Activated CD8-positive, alpha-beta T cell treated with anti-CD3 and anti-CD28 coated beads, Interleukin-2, amount 10 ng/mL, durations not matched to agents 7 days and 5 days (primary cell): ENCODE measurements at regions of chr22 and their contacts with region 1.

Region 1: GRCh38 chr22:26364066-26365015 is 64.7 kb upstream of the ASPHD2 start:
- DNase-seq: peak; percentile 70
- ATAC-seq: peak; percentile 91
- H3K4me3 Mint-ChIP-seq: no peak overlapping the region
- H3K27ac Mint-ChIP-seq: no peak overlapping the region
- H3K4me1 Mint-ChIP-seq: peaks cover 6% of the 10 kb centered on the region
- H3K27me3 Mint-ChIP-seq: peaks cover 14% of the 10 kb centered on the region

Region 2: DNA sequence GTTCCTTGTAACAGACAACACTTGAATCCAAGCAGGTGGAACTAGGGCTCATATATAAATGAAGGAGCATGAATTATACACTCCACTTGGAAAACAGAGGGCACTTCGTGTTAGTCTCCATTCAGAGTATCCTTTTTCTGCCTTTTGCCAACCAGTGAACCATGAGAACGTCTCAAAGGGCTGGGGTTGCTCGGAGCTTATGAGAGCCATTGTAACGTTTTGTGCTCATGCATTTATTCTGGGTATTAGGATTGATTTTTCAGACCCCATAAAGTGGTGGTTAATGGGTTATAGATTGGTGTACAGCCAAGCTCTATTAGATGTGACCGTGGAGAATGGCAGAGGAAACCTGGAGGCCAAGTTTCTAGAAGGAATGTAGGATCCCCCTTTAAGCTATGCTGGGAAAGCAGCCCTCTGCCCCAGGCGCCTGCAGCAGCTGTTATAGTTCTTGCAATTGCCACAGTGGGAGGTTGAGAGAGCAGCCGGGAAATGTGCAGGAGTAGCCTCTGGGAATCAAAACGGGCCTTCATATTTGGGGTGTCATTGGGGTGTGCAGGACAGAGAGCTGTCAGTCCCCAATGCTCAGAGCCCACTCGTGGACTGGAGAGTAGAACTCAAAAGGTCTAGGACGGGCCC is 10.2 kb after region 1 on chr22:
- CTCF ChIA-PET with region 1: interaction called, 13 read pairs
- POLR2A ChIA-PET with region 1: no interaction called
- DNase-seq: no peak
- ATAC-seq: no peak
- H3K4me3 Mint-ChIP-seq: no peak overlapping the region
- H3K27ac Mint-ChIP-seq: no peak overlapping the region
- H3K4me1 Mint-ChIP-seq: peaks cover 6% of the 10 kb centered on the region
- H3K27me3 Mint-ChIP-seq: peaks cover 34% of the 10 kb centered on the region

Region 3: DNA sequence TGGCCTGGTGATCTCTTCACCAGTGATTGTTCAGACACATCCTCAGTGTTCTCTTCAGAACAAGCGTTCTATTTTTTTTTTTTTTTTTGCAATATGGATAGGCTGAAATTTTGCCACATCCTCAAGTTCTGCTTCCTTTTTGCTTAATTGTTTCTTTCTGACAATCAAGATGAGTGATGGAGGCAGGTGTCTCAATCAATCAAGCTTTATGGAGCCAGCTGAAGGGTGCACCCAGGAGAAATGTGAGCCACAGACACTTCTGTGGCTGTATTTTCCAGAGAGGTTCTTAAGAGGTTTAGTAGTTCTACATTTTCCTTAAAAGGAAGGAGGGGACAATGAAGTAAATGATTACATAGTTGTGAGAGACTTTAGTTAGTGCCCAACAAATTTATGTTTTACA is 20.8 kb after region 1 on chr22:
- CTCF ChIA-PET with region 1: interaction called, 15 read pairs
- POLR2A ChIA-PET with region 1: no interaction called
- DNase-seq: no peak
- ATAC-seq: no peak
- H3K4me3 Mint-ChIP-seq: no peak overlapping the region
- H3K27ac Mint-ChIP-seq: no peak overlapping the region
- H3K4me1 Mint-ChIP-seq: no peaks in the 10 kb centered on the region
- H3K27me3 Mint-ChIP-seq: peaks cover 41% of the 10 kb centered on the region

Region 4: DNA sequence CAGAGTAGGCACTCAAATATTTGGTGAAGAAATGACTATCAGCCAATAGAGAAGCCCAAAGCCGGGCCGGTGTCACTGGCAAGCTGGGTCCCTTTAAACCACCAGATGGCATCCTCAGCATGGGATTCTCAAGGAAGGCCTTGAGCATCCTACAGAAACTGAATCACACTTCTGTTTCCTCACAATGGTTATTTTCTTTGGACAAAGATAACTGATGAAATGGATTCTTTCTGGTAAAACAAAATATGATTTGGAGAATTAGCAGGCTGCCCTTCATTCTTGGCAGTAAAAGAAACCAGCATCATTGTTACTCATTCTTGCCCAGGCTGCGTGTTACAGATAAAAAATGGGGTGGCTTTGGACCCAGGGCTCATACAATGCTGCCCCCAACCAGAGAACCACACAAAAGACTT is 34.4 kb after region 1 on chr22:
- CTCF ChIA-PET with region 1: interaction called, 10 read pairs
- POLR2A ChIA-PET with region 1: no interaction called
- DNase-seq: peak; percentile 66
- ATAC-seq: peak; percentile 85
- H3K4me3 Mint-ChIP-seq: no peak overlapping the region
- H3K27ac Mint-ChIP-seq: no peak overlapping the region
- H3K4me1 Mint-ChIP-seq: peaks cover 1% of the 10 kb centered on the region
- H3K27me3 Mint-ChIP-seq: peaks cover 2% of the 10 kb centered on the region

Region 5: DNA sequence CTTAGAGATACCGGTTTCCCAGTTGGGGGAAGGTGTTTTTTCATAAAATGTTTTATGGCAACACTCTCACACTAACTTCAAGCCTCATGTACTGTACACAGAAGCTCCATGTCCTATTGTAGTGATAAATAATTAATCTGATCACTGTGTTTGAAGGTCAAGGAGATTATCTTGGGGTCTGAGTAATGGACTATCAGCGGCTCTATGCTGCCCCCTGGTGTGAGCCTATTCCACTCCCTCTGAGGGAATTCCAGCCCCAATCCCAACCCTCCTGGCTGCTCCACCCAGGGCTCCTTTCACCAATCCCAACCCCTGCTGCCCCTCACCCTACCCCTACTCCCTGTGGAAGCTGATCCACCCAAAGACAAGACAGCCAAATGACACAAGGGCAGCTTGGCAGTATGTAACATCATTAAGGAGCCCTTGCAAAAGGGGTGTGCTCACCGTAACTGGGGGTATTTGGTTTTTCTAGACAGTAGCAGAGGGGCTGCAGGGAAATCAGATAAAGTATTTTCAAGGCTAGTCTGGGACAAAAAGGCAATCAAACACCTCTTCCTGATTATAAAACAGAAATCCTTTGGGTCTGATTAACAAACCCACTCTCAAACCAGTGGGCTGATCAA is 97.0 kb after region 1 on chr22:
- CTCF ChIA-PET with region 1: interaction called, 76 read pairs
- POLR2A ChIA-PET with region 1: no interaction called
- DNase-seq: peak; percentile 46
- ATAC-seq: no peak
- H3K4me3 Mint-ChIP-seq: no peak overlapping the region
- H3K27ac Mint-ChIP-seq: no peak overlapping the region
- H3K4me1 Mint-ChIP-seq: no peaks in the 10 kb centered on the region
- H3K27me3 Mint-ChIP-seq: no peaks in the 10 kb centered on the region

Region 6: GRCh38 chr22:26483439-26484359 is 119.4 kb after region 1 on chr22 and contains the starts of genes HPS4 and SRRD:
- CTCF ChIA-PET with region 1: interaction called, 16 read pairs
- POLR2A ChIA-PET with region 1: no interaction called
- DNase-seq: peak; percentile 93
- ATAC-seq: peak; percentile 81
- H3K4me3 Mint-ChIP-seq: peak within 1 kb of the TSS; percentile 86
- H3K27ac Mint-ChIP-seq: peak within 1 kb of the TSS; percentile 94
- H3K4me1 Mint-ChIP-seq: peaks cover 68% of the 10 kb centered on the region
- H3K27me3 Mint-ChIP-seq: no peaks in the 10 kb centered on the region
- total RNA-seq, gene HPS4: 32.2 to 34.6 TPM
- total RNA-seq, gene SRRD: 21.6 to 22.6 TPM

Region 7: DNA sequence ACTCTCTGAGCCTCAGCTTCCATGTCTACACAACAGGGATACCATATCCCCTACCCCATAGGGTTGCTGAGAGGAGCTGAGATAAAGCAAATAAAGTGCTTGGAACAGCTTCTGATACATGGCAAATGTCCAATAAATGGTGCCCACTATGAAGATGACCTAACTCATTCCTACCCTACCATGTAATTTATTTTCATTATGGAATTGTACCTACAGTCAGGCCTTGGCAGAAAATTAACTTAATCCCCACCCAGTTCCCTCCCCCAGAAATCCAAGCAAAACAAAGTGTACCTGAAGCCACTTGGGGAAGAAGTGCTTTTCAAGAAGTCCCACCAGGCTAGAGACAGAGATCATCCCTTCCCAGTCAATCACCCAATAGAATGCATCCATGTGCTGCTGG is 130.2 kb after region 1 on chr22:
- CTCF ChIA-PET with region 1: no interaction called
- POLR2A ChIA-PET with region 1: no interaction called
- DNase-seq: no peak
- ATAC-seq: no peak
- H3K4me3 Mint-ChIP-seq: no peak overlapping the region
- H3K27ac Mint-ChIP-seq: peak overlapping the region; percentile 75
- H3K4me1 Mint-ChIP-seq: peaks cover 14% of the 10 kb centered on the region
- H3K27me3 Mint-ChIP-seq: no peaks in the 10 kb centered on the region

Region 8: GRCh38 chr22:26672590-26673468 is 308.5 kb after region 1 on chr22:
- CTCF ChIA-PET with region 1: interaction called, 10 read pairs
- POLR2A ChIA-PET with region 1: no interaction called
- DNase-seq: peak; percentile 97
- ATAC-seq: peak; percentile 68
- H3K4me3 Mint-ChIP-seq: peak overlapping the region; percentile 97
- H3K27ac Mint-ChIP-seq: peak overlapping the region; percentile 98
- H3K4me1 Mint-ChIP-seq: peaks cover 70% of the 10 kb centered on the region
- H3K27me3 Mint-ChIP-seq: no peaks in the 10 kb centered on the region